Activated CD8-positive, alpha-beta T cell treated with anti-CD3 and anti-CD28 coated beads for 36 hours (primary cell): ENCODE measurements at regions of chrX and their contacts with region 1.

Region 1: DNA sequence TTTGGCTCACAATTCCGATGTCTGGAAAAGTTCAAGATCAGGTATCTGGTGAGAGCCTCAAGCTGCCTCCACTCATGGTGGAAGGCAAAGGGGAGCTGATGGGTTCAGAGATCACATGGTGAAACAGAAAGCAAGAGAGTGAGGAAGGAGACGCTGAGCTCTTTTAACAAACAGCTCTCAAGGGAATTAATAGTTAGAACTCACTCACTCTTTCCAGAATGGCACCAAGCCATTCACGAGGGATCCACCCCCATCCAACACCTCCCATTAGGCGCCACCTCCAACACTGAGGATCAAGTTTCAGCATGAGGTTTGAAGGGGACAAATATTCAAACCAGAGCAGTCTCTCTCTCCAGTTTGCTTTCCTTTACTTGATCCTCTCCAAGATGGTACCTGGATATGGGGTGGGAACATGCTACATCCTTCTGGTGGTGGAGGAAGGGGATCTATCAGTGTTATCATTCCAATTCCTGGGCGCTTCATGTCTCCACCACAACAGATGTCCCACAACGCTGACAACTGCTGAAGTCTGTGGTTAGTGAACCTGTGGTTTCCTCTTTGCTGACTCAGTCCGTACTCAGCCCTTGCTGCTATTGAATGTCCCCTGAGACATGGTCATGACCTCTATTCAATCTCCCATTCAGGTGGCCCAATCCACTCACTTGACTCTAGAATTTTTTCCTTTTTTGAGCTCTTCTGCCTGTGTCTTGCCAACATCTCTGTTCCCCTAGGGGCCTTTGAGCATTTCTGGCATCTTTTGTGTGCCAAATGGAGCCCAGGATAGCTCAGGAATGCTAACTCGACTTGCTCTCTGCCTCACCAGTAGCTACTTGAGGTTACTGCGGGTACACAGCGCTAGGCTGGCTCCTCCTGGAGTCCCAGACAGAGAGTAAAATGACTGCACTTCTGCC is 395.2 kb downstream of the MID1IP1 start:
- DNase-seq: peak; percentile 69
- ATAC-seq: peak; percentile 88
- H3K4me3 Mint-ChIP-seq: peak overlapping the region; percentile 52
- H3K27ac Mint-ChIP-seq: peak overlapping the region; percentile 87
- H3K4me1 Mint-ChIP-seq: peaks cover 52% of the 10 kb centered on the region
- H3K27me3 Mint-ChIP-seq: peaks cover 4% of the 10 kb centered on the region
- CTCF ChIP-seq: no peak

Region 2: DNA sequence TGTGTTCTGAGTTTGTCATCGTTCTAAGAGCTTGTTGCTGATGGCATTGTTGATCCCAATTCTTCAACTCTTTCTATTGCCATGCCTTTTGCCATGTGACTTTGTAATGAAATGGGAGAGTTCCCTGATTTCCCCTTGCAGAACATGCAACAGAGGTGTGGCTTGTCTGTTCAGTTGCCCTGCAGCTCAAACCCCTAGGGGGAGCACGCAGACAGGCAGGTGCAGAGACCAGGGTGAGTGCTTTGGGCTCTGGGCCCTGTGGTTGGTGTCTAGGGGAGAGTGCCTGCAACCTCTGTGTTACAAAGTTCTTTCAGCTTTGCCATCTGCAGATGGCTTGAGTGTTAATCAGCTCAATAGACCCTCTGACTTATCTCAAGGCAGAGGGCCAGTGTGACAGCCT is 62.5 kb before region 1 on chrX:
- CTCF ChIA-PET with region 1: no interaction called
- POLR2A ChIA-PET with region 1: no interaction called
- intact Hi-C with region 1: loop called (anchors 10 kb)
- DNase-seq: peak; percentile 29
- ATAC-seq: no peak
- H3K4me3 Mint-ChIP-seq: no peak overlapping the region
- H3K27ac Mint-ChIP-seq: no peak overlapping the region
- H3K4me1 Mint-ChIP-seq: no peaks in the 10 kb centered on the region
- H3K27me3 Mint-ChIP-seq: no peaks in the 10 kb centered on the region
- CTCF ChIP-seq: no peak